Breast epithelium (tissue), 4 donors: ENCODE measurements at regions of chr7 and their contacts with region 1.

Region 1: GRCh38 chr7:39465055-39465929 is 100.9 kb upstream of the YAE1 start:
- DNase-seq: peak in 1 of 2 donors; percentile 30
- H3K4me3 ChIP-seq: peak overlapping the region in 1 of 3 donors; percentile 32
- H3K27ac ChIP-seq: no peak overlapping the region
- H3K4me1 ChIP-seq: no peaks in the 10 kb centered on the region
- H3K27me3 ChIP-seq: no peaks in the 10 kb centered on the region
- CTCF ChIP-seq: peak in 2 of 3 donors; percentile 64 to 66
- POLR2A ChIP-seq: no peak

Region 2: DNA sequence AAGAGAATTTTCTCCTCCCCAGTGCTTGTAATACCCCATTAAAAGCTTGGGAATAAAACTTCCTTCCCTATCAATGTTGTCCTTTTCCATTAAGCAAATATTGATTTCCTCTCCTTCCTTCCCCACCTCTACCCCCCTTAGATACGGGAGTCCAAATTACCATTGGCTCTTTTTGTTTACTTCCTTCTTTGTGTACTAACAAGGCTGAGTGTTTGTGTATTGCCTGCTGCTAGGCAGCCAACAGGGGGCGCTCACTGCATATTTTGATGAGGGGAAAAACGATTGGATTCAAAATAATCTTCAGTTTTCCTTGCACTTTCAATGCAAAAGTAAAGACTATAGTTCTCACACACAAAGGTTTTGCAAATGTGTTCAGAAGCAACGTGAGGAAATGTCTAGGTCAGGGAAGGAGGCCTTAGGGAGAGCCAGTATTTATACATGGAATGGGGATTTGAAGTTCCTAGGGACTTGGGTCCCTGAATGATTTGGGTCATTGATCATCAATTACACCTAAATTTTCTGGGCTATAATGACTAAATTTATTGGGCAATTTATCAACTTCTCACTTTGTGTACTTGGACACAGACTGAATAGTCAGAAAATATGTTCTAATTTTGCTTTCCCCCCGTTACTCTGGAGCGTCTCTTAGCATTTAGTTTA is 532.7 kb before region 1 on chr7:
- intact Hi-C with region 1: loop called (anchors 10 kb)
- DNase-seq: no peak
- H3K4me3 ChIP-seq: no peak overlapping the region
- H3K27ac ChIP-seq: no peak overlapping the region
- H3K4me1 ChIP-seq: no peaks in the 10 kb centered on the region
- H3K27me3 ChIP-seq: no peaks in the 10 kb centered on the region
- CTCF ChIP-seq: peak in 2 of 3 donors; percentile 55 to 61
- POLR2A ChIP-seq: no peak